ENCODE measurements at regions of chr19 and their contacts with region 1.

Region 1: GRCh38 chr19:10543420-10544241 is at the start of gene ATG4D:
- DNase-seq: peak; percentile 68 to 92 (median 80)
- ATAC-seq: peak; percentile 86
- H3K4me3 ChIP-seq: peak within 1 kb of the TSS; percentile 90
- H3K4me3 Mint-ChIP-seq: peak within 1 kb of the TSS; percentile 89
- H3K27ac ChIP-seq: peak within 1 kb of the TSS; percentile 48 to 78
- H3K27ac Mint-ChIP-seq: peak within 1 kb of the TSS; percentile 79
- H3K4me1 ChIP-seq: peaks cover 27% of the 10 kb centered on the region
- H3K4me1 Mint-ChIP-seq: peaks cover 18% of the 10 kb centered on the region
- H3K27me3 ChIP-seq: peaks cover 0 to 3% of the 10 kb centered on the region in 2 experiments
- H3K27me3 Mint-ChIP-seq: peaks cover 5% of the 10 kb centered on the region
- CTCF ChIP-seq: no peak
- total RNA-seq, gene ATG4D: 81.1 to 84.6 TPM

Region 2: DNA sequence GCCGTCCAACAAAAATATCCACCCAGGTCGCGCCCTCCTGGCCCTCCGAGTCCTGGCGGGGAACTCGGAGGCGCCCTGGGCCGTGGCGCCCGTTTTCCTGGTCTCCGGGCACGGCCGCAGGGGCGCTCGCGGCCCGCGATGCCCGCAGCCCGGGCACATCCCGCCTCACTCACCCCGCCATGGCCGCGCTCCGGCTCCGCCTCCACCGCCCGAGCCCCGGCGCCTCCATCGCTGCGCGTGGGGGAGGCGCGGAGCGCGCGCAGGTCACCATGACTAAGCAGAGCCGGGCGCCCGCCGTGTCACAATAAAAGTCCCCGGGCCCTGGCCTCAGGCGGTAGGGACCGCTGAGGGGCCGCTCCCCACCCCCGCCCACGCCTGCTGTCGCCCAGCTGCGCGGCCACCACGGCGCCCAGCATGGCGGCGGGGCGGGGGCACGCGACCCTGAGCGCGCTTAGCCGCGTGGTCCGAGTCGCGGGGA is 41.1 kb before region 1 on chr19:
- CTCF ChIA-PET with region 1: no interaction called
- POLR2A ChIA-PET with region 1: no interaction called
- intact Hi-C with region 1: loop called in 1 of 2 experiments (anchors 5 kb)
- DNase-seq: peak; percentile 75 to 94 (median 86)
- ATAC-seq: peak; percentile 93
- H3K4me3 ChIP-seq: peak overlapping the region; percentile 84
- H3K4me3 Mint-ChIP-seq: peak overlapping the region; percentile 88
- H3K27ac ChIP-seq: peak overlapping the region; percentile 67
- H3K27ac Mint-ChIP-seq: peak overlapping the region; percentile 52
- H3K4me1 ChIP-seq: peaks cover 52% of the 10 kb centered on the region
- H3K4me1 Mint-ChIP-seq: peaks cover 30% of the 10 kb centered on the region
- H3K27me3 ChIP-seq: no peaks in the 10 kb centered on the region
- H3K27me3 Mint-ChIP-seq: no peaks in the 10 kb centered on the region
- CTCF ChIP-seq: no peak

Region 3: GRCh38 chr19:10712045-10712444 is 168.4 kb after region 1 on chr19:
- CTCF ChIA-PET with region 1: no interaction called
- POLR2A ChIA-PET with region 1: no interaction called
- intact Hi-C with region 1: no loop called
- DNase-seq: no peak
- ATAC-seq: no peak
- H3K4me3 ChIP-seq: no peak overlapping the region
- H3K4me3 Mint-ChIP-seq: no peak overlapping the region
- H3K27ac ChIP-seq: no peak overlapping the region
- H3K27ac Mint-ChIP-seq: peak overlapping the region; percentile 90
- H3K4me1 ChIP-seq: peaks cover 6% of the 10 kb centered on the region
- H3K4me1 Mint-ChIP-seq: peaks cover 13% of the 10 kb centered on the region
- H3K27me3 ChIP-seq: no peaks in the 10 kb centered on the region
- H3K27me3 Mint-ChIP-seq: no peaks in the 10 kb centered on the region
- CTCF ChIP-seq: no peak